ENCODE measurements at regions of chr3 and their contacts with region 1.

Region 1: GRCh38 chr3:121477589-121477988 is 68.2 kb downstream of the POLQ start:
- DNase-seq: no peak
- ATAC-seq: no peak
- H3K4me3 ChIP-seq: no peak overlapping the region
- H3K4me3 Mint-ChIP-seq: no peak overlapping the region
- H3K27ac ChIP-seq: no peak overlapping the region
- H3K27ac Mint-ChIP-seq: no peak overlapping the region
- H3K4me1 ChIP-seq: no peaks in the 10 kb centered on the region
- H3K4me1 Mint-ChIP-seq: no peaks in the 10 kb centered on the region
- H3K27me3 ChIP-seq: no peaks in the 10 kb centered on the region
- H3K27me3 Mint-ChIP-seq: no peaks in the 10 kb centered on the region
- CTCF ChIP-seq: no peak

Region 2: GRCh38 chr3:121152573-121152972 is 325.0 kb before region 1 on chr3:
- CTCF ChIA-PET with region 1: no interaction called
- POLR2A ChIA-PET with region 1: no interaction called
- intact Hi-C with region 1: no loop called
- DNase-seq: no peak
- ATAC-seq: no peak
- H3K4me3 ChIP-seq: no peak overlapping the region
- H3K4me3 Mint-ChIP-seq: no peak overlapping the region
- H3K27ac ChIP-seq: no peak overlapping the region
- H3K27ac Mint-ChIP-seq: no peak overlapping the region
- H3K4me1 ChIP-seq: no peaks in the 10 kb centered on the region
- H3K4me1 Mint-ChIP-seq: no peaks in the 10 kb centered on the region
- H3K27me3 ChIP-seq: no peaks in the 10 kb centered on the region
- H3K27me3 Mint-ChIP-seq: no peaks in the 10 kb centered on the region
- CTCF ChIP-seq: no peak

Region 3: DNA sequence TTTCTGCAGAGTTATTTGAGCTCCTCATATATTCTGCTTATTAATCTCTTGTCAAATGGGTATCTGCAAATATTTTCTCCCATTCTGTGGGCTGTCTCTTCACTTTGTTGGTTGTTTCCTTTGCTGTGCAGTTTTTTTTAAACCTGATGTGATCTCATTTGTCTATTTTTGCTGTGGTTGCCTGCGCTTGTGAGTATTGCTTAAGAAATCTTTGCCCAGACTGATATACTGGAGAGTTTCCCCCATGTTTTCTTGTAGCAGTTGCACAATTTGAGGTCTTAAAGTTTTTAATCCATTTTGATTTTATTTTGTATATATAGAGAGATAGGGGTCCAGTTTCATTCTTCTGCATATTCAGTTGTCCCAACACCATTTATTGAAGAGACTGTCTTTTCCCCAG is 34.1 kb before region 1 on chr3:
- CTCF ChIA-PET with region 1: no interaction called
- POLR2A ChIA-PET with region 1: no interaction called
- intact Hi-C with region 1: loop called in 1 of 2 experiments (anchors 2 kb)
- DNase-seq: no peak
- ATAC-seq: no peak
- H3K4me3 ChIP-seq: no peak overlapping the region
- H3K4me3 Mint-ChIP-seq: no peak overlapping the region
- H3K27ac ChIP-seq: no peak overlapping the region
- H3K27ac Mint-ChIP-seq: no peak overlapping the region
- H3K4me1 ChIP-seq: no peaks in the 10 kb centered on the region
- H3K4me1 Mint-ChIP-seq: no peaks in the 10 kb centered on the region
- H3K27me3 ChIP-seq: no peaks in the 10 kb centered on the region
- H3K27me3 Mint-ChIP-seq: no peaks in the 10 kb centered on the region
- CTCF ChIP-seq: no peak

Measured in CD8-positive, alpha-beta T cell (primary cell).